ENCODE measurements at regions of chr10 and their contacts with region 1.

Region 1: GRCh38 chr10:61750929-61751471 is 88.3 kb downstream of the CABCOCO1 start:
- DNase-seq: peak; percentile 81
- H3K4me3 ChIP-seq: no peak overlapping the region
- H3K27ac ChIP-seq: no peak overlapping the region
- H3K4me1 ChIP-seq: peaks cover 22% of the 10 kb centered on the region
- CTCF ChIP-seq: peak; percentile 86

Region 2: GRCh38 chr10:61765176-61766087 is 14.4 kb after region 1 on chr10:
- CTCF ChIA-PET with region 1: interaction called, 3 read pairs
- POLR2A ChIA-PET with region 1: interaction called, 10 read pairs
- intact Hi-C with region 1: no loop called
- DNase-seq: no peak
- H3K4me3 ChIP-seq: no peak overlapping the region
- H3K27ac ChIP-seq: no peak overlapping the region
- H3K4me1 ChIP-seq: peaks cover 5% of the 10 kb centered on the region
- CTCF ChIP-seq: no peak

Region 3: DNA sequence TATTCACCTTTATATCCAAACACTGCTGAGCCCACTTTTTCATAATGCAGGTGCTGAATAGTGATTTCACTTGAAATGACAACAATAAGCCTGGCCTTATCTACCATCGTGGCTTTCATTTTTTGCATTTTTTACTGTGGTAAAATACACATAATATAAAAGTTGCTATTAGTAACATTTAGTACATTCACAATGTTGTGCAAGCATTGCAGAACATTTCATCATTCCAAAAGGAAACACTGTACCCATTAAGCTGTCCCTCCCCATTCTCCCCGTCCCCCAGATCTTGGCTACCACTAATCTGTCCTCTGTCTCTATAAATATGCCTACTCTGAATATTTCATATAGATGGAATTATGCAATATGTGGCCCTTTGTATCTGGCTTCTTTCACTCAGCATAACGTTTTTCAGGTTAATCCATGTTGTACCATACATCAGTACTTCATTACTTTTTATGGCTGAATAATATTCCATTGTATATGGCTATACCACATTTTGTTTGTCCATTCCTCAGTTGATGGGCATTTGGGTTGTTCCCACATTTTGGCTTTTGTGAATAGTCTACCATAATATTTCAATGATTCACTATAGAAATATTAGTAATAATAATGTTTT is 82.0 kb after region 1 on chr10:
- CTCF ChIA-PET with region 1: no interaction called
- POLR2A ChIA-PET with region 1: interaction called, 3 read pairs
- intact Hi-C with region 1: loop called (anchors 5 kb)
- DNase-seq: no peak
- H3K4me3 ChIP-seq: no peak overlapping the region
- H3K27ac ChIP-seq: no peak overlapping the region
- H3K4me1 ChIP-seq: no peaks in the 10 kb centered on the region
- CTCF ChIP-seq: no peak

Region 4: DNA sequence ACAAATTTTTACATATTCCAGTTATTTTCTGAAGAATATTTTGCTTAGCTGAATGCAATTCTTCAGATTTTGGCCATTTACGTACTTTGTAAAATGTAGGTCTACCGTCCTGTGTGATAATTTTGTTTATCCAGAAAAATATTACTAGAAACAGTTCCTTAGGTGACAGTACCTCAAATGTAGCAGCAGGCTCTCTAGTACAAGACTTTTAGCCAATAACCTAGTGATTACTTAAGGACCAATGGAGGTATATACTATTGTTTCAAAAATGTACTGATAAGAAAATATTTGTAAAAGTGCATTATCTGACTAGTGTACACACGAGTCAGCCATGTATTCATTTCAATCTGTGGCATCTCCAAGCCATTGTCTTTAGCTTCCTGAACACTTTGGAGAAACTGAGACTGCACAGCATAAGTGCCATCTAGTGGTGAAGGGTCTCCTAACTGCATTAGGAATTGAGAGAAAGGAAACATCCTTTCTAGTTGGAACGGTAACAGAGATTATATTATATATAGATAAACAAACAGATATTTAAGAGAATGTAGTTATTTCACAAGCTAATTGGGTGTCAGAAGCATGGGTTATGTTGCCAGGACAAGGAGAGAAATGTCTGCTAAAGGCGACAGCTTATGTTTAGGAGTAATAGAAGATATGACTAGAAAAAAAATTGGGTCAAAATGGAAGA is 493.9 kb after region 1 on chr10:
- CTCF ChIA-PET with region 1: interaction called, 4 read pairs
- POLR2A ChIA-PET with region 1: no interaction called
- intact Hi-C with region 1: loop called (anchors 2 kb)
- DNase-seq: peak; percentile 86
- H3K4me3 ChIP-seq: no peak overlapping the region
- H3K27ac ChIP-seq: peak overlapping the region; percentile 67
- H3K4me1 ChIP-seq: peaks cover 26% of the 10 kb centered on the region
- CTCF ChIP-seq: peak; percentile 99

Measured in OCI-LY7 (cell line).